ENCODE measurements at regions of chr9 and their contacts with region 1.

Region 1: GRCh38 chr9:127450830-127451724 is at the starts of genes LRSAM1 and RPL12:
- DNase-seq: peak; percentile 99
- H3K4me3 ChIP-seq: peak within 1 kb of the TSS; percentile 73 to 87 (median 79)
- H3K27ac ChIP-seq: peak within 1 kb of the TSS; percentile 94 to 98 (median 96)
- H3K4me1 ChIP-seq: peaks cover 0 to 66% (median 58%) of the 10 kb centered on the region in 4 donors
- H3K27me3 ChIP-seq: no peaks in the 10 kb centered on the region
- CTCF ChIP-seq: no peak
- EP300 ChIP-seq: peak in 2 of 4 donors; percentile 22 to 57
- POLR2A ChIP-seq: peak; percentile 100
- total RNA-seq, gene LRSAM1: 17.9 to 54.0 (median 30.2) TPM
- total RNA-seq, gene RPL12: 2,502 to 5,061 (median 3,494) TPM

Region 2: GRCh38 chr9:127224178-127224882 is 226.7 kb before region 1 on chr9:
- intact Hi-C with region 1: loop called (anchors 5 kb)
- DNase-seq: peak; percentile 97
- H3K4me3 ChIP-seq: peak overlapping the region; percentile 36 to 84 (median 68)
- H3K27ac ChIP-seq: peak overlapping the region; percentile 80 to 85 (median 82)
- H3K4me1 ChIP-seq: peaks cover 0 to 23% (median 20%) of the 10 kb centered on the region in 4 donors
- H3K27me3 ChIP-seq: no peaks in the 10 kb centered on the region
- CTCF ChIP-seq: peak in 2 of 4 experiments; percentile 18 to 32
- EP300 ChIP-seq: no peak
- POLR2A ChIP-seq: no peak

Region 3: DNA sequence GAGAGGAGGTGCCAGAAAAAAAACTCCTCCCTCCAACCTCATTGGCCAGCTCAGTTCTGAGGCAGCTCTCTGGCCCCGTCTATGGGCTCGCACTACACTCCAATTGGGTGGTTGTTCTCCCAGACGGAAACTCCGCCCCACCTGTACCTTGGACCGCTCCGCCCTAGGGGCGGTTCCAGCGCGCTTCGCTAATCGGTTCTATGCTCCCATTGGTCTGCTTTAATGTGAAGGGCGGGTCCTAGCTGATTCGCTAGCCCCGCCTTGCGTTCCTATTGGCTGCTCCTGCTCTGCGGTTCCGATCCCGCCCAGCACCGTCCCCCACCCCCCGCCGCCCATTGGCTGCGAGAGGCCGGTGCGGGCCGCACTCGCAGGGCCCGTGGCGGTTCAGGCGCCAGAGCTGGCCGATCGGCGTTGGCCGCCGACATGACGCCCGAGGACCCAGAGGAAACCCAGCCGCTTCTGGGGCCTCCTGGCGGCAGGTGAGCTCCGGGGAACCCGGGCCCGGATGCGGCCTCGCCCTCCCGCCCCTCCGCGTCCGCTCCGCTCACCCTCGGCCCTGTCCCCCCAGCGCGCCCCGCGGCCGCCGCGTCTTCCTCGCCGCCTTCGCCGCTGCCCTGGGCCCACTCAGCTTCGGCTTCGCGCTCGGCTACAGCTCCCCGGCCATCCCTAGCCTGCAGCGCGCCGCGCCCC is 54.1 kb before region 1 on chr9 and contains the start of gene SLC2A8:
- intact Hi-C with region 1: loop called (anchors 1 kb)
- DNase-seq: peak; percentile 100
- H3K4me3 ChIP-seq: peak within 1 kb of the TSS; percentile 84 to 97 (median 96)
- H3K27ac ChIP-seq: peak within 1 kb of the TSS; percentile 92 to 98 (median 95)
- H3K4me1 ChIP-seq: peaks cover 0 to 51% (median 29%) of the 10 kb centered on the region in 4 donors
- H3K27me3 ChIP-seq: no peaks in the 10 kb centered on the region
- CTCF ChIP-seq: peak in 1 of 4 experiments; percentile 21
- EP300 ChIP-seq: no peak
- POLR2A ChIP-seq: peak; percentile 74 to 80
- total RNA-seq, gene SLC2A8: 45.1 to 68.7 (median 64.4) TPM

Region 4: GRCh38 chr9:127423934-127424675 is 27.0 kb before region 1 on chr9 and contains the start of gene ZNF79:
- intact Hi-C with region 1: loop called (anchors 2 kb)
- DNase-seq: peak; percentile 97
- H3K4me3 ChIP-seq: peak within 1 kb of the TSS; percentile 59 to 94 (median 78)
- H3K27ac ChIP-seq: peak within 1 kb of the TSS; percentile 89 to 98 (median 91)
- H3K4me1 ChIP-seq: peaks cover 0 to 59% (median 38%) of the 10 kb centered on the region in 4 donors
- H3K27me3 ChIP-seq: no peaks in the 10 kb centered on the region
- CTCF ChIP-seq: no peak
- EP300 ChIP-seq: peak in 1 of 4 donors; percentile 36
- POLR2A ChIP-seq: peak; percentile 28 to 69
- total RNA-seq, gene ZNF79: 10.9 to 14.6 (median 13.9) TPM

Region 5: GRCh38 chr9:127578955-127579853 is 128.1 kb after region 1 on chr9:
- intact Hi-C with region 1: no loop called
- DNase-seq: peak; percentile 95
- H3K4me3 ChIP-seq: peak overlapping the region in 3 of 4 donors; percentile 21 to 37 (median 26)
- H3K27ac ChIP-seq: peak overlapping the region; percentile 89 to 95 (median 94)
- H3K4me1 ChIP-seq: peaks cover 0 to 49% (median 45%) of the 10 kb centered on the region in 4 donors
- H3K27me3 ChIP-seq: no peaks in the 10 kb centered on the region
- CTCF ChIP-seq: peak in 3 of 4 experiments; percentile 28 to 31 (median 31)
- EP300 ChIP-seq: no peak
- POLR2A ChIP-seq: no peak

Measured in sigmoid colon (tissue), 7 donors.